OCI-LY7 (cell line): ENCODE measurements at regions of chr2 and their contacts with region 1.

Region 1: DNA sequence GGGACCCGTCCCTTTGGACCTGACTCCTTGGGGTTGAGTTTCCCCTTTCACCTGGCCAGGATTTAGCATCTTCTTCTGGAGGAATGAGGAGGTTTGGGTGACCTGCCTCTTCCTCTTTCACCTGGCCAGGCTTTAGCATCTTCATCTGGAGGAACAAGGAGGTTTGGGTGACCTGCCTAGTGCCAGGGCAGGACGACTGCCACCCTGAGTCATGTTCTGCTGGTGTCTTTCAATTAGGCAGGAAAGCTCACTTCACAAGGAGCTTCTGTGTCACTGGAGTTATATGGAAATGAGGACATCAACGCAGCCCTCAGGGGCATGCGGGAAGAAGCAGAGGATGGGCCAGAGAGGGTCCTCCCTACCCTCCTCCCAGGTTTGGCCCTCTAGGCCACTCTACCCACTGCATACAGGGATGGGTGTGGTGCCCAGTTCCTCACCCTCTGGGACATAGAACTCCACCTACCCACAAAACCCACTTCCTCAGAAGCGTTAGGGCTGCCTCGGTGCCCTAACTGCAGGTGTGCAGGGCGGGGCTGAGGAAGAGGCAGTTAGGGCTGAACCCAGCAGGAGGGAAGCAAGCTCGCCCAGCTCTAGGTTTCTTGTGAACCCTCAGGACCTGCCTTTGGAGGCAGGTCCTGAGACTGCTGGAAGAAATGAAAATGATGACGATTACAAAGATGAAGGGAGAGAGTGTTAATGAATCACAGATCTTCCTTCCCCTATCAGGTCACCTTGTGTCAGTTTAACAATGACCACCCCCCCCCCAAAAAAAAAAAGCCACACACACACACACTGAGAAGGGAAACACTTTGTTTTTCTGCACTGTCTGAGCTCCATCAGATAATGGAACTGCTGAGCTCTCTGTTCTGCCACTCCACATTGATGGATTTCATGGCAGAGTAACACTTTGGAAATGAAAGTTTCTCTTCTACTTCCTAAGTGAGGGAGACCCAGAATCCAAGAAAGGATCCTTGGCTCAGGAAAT is 71.0 kb downstream of the ARL4C start:
- DNase-seq: peak; percentile 97
- H3K4me3 ChIP-seq: peak overlapping the region; percentile 35
- H3K27ac ChIP-seq: peak overlapping the region; percentile 94
- H3K4me1 ChIP-seq: peaks cover 78% of the 10 kb centered on the region
- CTCF ChIP-seq: no peak; the same call in 1 of the 2 replicates

Region 2: GRCh38 chr2:234203135-234203984 is 222.6 kb before region 1 on chr2:
- CTCF ChIA-PET with region 1: no interaction called
- POLR2A ChIA-PET with region 1: no interaction called
- intact Hi-C with region 1: no loop called
- DNase-seq: no peak
- H3K4me3 ChIP-seq: no peak overlapping the region
- H3K27ac ChIP-seq: no peak overlapping the region
- H3K4me1 ChIP-seq: no peaks in the 10 kb centered on the region
- CTCF ChIP-seq: no peak

Region 3: DNA sequence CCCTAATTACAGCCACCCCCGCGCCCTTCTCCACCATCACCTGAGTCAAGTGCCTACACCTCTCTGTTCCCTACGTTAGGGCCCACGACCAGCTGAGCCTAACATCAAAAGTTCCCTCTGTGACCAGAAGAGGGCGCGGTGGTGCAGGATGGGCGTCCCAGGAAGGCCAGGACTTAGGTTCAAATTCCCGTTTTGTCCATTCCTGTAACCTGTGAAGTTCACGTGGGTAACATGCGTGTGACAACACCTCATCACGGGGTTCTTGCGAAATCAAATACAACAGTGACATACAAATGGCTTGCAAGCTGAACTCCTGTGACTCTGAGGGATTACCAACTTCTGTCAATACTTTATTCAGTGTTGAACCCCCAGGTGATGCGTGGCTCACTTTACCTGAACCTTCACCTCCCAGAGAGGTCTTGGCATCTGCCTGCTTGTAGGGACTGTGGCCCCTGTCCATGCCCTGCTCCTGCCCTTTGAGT is 136.9 kb before region 1 on chr2:
- CTCF ChIA-PET with region 1: no interaction called
- POLR2A ChIA-PET with region 1: interaction called, 10 read pairs
- intact Hi-C with region 1: loop called (anchors 1 kb)
- DNase-seq: peak; percentile 72
- H3K4me3 ChIP-seq: peak overlapping the region; percentile 4
- H3K27ac ChIP-seq: peak overlapping the region; percentile 97
- H3K4me1 ChIP-seq: peaks cover 56% of the 10 kb centered on the region
- CTCF ChIP-seq: peak; percentile 95

Region 4: GRCh38 chr2:234355021-234355720 is 70.7 kb before region 1 on chr2:
- CTCF ChIA-PET with region 1: no interaction called
- POLR2A ChIA-PET with region 1: interaction called, 7 read pairs
- intact Hi-C with region 1: loop called (anchors 2 kb)
- DNase-seq: peak; percentile 92
- H3K4me3 ChIP-seq: peak overlapping the region; percentile 39
- H3K27ac ChIP-seq: peak overlapping the region; percentile 73
- H3K4me1 ChIP-seq: peaks cover 42% of the 10 kb centered on the region
- CTCF ChIP-seq: no peak; the same call in 1 of the 2 replicates

Region 5: DNA sequence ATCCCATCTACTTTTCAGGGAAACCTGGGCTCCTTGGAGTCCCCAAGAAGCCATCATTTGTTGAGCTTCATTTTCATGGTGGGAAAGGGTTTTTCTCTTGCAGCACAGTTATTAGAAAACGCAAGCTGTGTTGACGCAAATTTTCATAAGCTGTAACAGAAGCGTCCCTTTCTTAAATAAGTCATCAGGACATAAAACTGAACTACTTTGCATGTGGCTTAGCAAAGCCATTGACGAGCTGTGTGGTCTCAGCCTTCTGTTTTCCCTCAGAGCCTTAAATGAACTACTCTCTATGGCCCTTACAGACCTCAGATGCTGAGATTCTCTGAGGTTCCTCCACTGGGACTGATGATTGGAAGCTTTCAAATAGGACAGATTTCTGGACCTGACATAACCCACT is 14.1 kb before region 1 on chr2:
- CTCF ChIA-PET with region 1: interaction called, 4 read pairs
- POLR2A ChIA-PET with region 1: interaction called, 55 read pairs
- intact Hi-C with region 1: no loop called
- DNase-seq: peak; percentile 32
- H3K4me3 ChIP-seq: peak overlapping the region; percentile 15
- H3K27ac ChIP-seq: no peak overlapping the region
- H3K4me1 ChIP-seq: peaks cover 25% of the 10 kb centered on the region
- CTCF ChIP-seq: no peak

Region 6: DNA sequence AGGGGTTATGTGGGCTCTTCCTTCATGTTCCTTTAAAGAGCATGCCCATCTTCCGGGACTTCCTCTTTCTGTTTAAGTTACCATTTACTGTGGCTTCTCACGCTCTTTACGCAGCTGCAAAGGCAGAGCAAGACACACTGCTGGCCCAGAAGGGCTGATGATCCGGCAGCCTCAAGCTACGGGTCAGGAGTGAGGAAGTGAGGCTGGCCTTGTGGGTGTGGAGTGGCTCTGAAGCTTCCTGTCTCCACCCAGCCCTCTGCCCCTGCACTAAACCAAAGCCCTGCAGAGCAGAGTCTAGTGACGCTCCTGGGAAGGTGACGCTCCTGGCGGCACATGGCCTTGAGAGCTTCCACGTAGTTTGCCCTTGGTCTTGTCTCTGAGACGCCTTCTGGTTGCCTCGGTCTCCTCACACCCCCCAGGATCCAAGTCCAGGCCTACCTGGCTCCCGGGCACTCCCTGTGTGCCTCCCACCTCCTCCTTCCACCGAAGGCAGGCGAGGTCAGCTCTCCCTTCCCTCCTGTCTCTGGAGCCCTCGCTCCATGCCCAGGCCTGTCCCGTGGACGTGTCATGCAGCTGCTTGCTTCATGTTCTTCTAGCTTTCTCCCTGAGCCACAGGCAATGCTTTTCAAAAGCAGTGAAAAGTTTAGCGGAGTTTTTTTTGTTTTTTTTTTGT is 20.6 kb after region 1 on chr2:
- CTCF ChIA-PET with region 1: interaction called, 3 read pairs
- POLR2A ChIA-PET with region 1: interaction called, 16 read pairs
- intact Hi-C with region 1: loop called (anchors 1 kb)
- DNase-seq: peak; percentile 93
- H3K4me3 ChIP-seq: no peak overlapping the region
- H3K27ac ChIP-seq: peak overlapping the region; percentile 77
- H3K4me1 ChIP-seq: peaks cover 51% of the 10 kb centered on the region
- CTCF ChIP-seq: no peak

Region 7: GRCh38 chr2:234483568-234484251 is 57.8 kb after region 1 on chr2:
- CTCF ChIA-PET with region 1: interaction called, 3 read pairs
- POLR2A ChIA-PET with region 1: interaction called, 13 read pairs
- intact Hi-C with region 1: loop called (anchors 1 kb)
- DNase-seq: peak; percentile 95
- H3K4me3 ChIP-seq: peak overlapping the region; percentile 56
- H3K27ac ChIP-seq: peak overlapping the region; percentile 97
- H3K4me1 ChIP-seq: peaks cover 79% of the 10 kb centered on the region
- CTCF ChIP-seq: peak; percentile 80

Region 8: DNA sequence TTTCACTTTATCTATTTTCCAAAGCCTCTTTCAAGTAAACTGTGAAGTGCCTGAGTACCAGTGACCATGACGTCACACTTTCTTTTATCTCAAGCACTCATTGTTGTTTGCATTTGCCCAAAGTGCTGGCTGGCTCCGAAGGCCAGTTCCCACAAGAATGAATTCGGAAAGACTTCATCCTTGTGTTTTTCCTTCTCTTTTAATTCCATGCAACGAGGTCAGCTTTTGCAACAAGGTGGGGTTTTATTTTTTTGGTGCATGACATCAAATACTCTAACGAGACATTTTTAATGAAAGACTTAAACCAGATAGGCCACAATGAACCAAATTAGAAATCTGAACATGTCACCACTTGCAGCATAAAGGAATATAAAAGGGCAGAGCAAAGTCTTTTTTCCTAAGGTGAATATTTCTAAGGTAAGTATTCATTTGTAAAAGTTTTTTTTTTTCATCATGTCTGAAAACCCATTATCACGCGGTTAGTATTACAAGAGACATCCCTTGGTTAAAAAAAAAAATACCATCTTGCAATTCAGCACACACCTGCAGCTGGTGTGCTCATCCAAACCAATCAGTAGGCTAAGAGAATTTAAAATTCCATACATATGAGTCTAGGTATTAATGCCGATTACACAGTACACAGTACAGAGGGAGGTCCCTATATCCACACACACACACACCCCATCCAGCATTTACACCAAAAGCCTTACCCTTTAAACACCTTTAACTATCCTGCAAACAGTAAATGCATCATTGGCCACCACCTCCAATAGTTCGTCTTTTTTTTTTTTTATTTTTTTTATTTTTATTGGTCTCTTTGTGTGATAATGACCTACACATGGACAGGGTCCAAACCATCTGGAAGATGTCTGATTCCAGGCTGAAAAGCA is 68.7 kb after region 1 on chr2:
- CTCF ChIA-PET with region 1: interaction called, 4 read pairs
- POLR2A ChIA-PET with region 1: interaction called, 6 read pairs
- intact Hi-C with region 1: loop called (anchors 1 kb)
- DNase-seq: peak; percentile 55
- H3K4me3 ChIP-seq: peak overlapping the region; percentile 96
- H3K27ac ChIP-seq: peak overlapping the region; percentile 51
- H3K4me1 ChIP-seq: peaks cover 46% of the 10 kb centered on the region
- CTCF ChIP-seq: no peak